Posterior cingulate gyrus (tissue), 11 donors: ENCODE measurements at regions of chr3 and their contacts with region 1.

Region 1: DNA sequence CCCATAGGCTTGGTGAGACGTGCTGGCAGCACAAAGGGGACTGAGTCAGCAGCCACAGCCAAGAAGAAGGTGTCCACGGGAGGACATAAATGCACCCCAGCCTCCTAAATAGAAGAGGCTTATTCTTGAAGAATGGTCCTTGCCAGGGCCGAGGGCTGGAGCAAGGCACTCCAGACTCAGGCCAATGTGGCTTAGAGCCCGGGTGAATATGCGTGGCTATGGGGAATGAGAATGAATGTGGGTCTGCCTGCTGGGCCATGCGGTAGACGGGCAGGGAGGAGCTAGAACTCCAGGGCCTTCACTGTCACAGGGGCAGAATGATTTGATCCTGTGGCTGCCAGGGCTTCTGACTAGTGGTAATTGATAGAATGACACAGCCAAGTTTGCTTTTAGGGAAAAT is 34.0 kb downstream of the DHX30 start:
- DNase-seq: peak in 4 of 10 donors; percentile 28 to 87 (median 66)

Region 2: DNA sequence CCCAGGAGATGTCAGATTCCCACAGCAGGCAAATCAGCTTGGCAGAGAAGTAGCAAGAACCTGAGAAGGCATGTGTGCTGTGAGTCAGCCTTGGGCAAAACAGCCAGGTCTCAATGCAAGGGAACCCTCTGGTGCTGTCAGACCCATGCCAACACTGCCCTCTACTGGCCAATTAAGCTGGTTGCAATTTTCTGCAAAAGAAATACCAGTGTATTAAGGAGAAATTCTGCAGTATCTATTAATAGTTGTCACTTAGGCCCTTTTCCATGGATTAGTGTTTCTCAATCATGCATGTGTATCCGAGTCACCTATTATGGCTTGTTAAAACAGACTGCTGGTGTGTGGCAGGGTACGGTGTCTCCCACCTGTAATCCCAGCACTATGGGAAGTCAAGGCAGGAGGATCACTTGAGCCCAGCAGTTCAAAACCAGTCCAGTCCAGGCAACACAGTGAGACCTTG is 153.0 kb after region 1 on chr3:
- intact Hi-C with region 1: loop called (anchors 1 kb)
- DNase-seq: peak; percentile 54 to 96 (median 74)

Region 3: DNA sequence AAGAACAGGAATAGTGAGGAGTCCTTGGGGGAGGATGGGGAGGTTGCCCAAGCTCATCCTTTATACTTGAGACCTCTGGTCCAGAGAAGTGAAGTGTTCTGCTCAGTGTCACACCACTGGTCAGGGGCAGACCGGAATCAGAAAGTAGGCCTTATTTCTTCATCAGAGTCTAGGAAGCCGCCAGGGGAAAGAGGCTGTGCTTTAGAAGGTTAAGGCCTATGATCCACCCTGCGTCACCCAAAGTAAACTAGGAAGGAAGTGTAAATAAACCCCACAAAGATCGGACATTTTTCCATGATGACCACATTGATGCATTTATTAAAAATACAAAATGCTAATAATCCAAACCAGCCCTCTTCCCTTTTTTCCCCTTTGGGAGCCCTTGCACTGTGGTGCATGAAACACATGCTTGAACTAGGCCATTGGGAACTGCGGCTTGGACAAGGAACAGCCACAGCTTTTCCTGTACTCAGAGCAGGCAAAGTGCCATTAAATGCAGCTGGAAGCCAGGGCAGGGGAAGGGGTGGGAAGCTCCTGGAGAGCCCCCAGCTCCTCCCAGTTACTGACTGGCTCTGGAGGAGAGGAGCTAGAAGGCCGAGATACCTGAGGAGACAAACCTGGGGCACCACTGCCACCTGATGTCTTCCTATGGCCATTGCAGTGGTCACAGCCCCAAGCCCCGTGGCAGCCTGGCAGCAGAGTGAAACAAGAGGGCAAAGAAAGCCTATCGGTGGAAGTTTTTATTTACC is 314.2 kb after region 1 on chr3:
- intact Hi-C with region 1: loop called (anchors 1 kb)
- DNase-seq: peak; percentile 53 to 96 (median 74)